ENCODE measurements at regions of chr9 and their contacts with region 1.

Region 1: GRCh38 chr9:92764988-92765936 is 629 bp upstream of the BICD2 start:
- DNase-seq: peak; percentile 96 to 99 (median 97)
- ATAC-seq: peak; percentile 89
- H3K4me3 ChIP-seq: peak overlapping the region; percentile 68 to 94
- H3K4me3 Mint-ChIP-seq: peak overlapping the region; percentile 91
- H3K27ac ChIP-seq: peak overlapping the region; percentile 98 to 99
- H3K27ac Mint-ChIP-seq: peak overlapping the region; percentile 98
- H3K4me1 ChIP-seq: peaks cover 37% of the 10 kb centered on the region
- H3K4me1 Mint-ChIP-seq: peaks cover 55% of the 10 kb centered on the region
- H3K27me3 ChIP-seq: no peaks in the 10 kb centered on the region
- H3K27me3 Mint-ChIP-seq: no peaks in the 10 kb centered on the region
- CTCF ChIP-seq: peak; percentile 91

Region 2: DNA sequence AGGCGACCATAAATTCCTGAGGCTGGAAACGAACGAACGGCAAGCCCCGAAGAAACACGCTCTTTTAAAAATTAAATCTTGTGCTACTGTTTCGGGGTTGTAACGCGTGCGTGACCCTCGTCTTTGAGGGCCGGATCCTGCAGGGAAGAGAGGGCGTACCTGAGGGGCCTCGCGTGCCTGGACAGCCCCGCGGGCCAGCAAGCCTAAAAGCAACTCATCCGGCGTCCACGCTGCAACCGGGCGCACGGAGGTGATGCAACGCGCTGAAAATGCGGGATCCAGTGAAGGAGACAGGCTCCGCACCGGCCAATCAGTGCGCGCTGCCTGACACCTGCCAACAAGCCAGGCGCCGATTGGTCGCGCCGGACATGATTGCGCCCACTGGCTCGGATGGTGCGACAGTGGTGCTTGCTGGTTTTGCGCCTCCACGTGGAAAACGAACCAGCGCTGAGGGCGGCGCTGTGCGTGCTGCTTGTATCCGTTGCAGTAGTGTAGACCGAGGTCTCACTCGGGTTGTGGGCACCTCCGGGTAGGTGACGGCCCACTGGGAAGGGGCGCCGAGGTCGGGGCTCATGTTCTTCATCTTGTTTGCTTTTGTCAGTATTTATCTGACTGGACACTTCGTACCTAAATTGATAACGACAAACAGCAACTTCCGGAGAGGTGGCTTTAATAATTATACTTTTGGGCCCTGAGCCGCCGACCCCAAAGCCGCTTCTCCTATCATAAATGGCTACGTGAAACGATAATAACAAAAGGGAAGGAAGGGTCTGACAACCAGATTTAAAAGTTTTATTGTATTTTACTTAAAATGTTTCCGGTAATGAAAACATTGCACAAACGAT is 471.6 kb before region 1 on chr9 and contains the start of gene IARS1:
- CTCF ChIA-PET with region 1: no interaction called
- POLR2A ChIA-PET with region 1: no interaction called
- intact Hi-C with region 1: loop called (anchors 1 kb)
- DNase-seq: peak; percentile 97 to 100 (median 100)
- ATAC-seq: peak; percentile 91
- H3K4me3 ChIP-seq: peak within 1 kb of the TSS; percentile 79 to 88
- H3K4me3 Mint-ChIP-seq: peak within 1 kb of the TSS; percentile 99
- H3K27ac ChIP-seq: peak within 1 kb of the TSS; percentile 78 to 90
- H3K27ac Mint-ChIP-seq: peak within 1 kb of the TSS; percentile 98
- H3K4me1 ChIP-seq: peaks cover 25% of the 10 kb centered on the region
- H3K4me1 Mint-ChIP-seq: peaks cover 46% of the 10 kb centered on the region
- H3K27me3 ChIP-seq: no peaks in the 10 kb centered on the region
- H3K27me3 Mint-ChIP-seq: no peaks in the 10 kb centered on the region
- CTCF ChIP-seq: peak; percentile 28
- total RNA-seq, gene IARS1: 64.2 to 66.2 TPM

Region 3: GRCh38 chr9:92716557-92716956 is 48.7 kb before region 1 on chr9:
- CTCF ChIA-PET with region 1: interaction called, 12 read pairs
- POLR2A ChIA-PET with region 1: no interaction called
- intact Hi-C with region 1: loop called (anchors 1 to 2 kb)
- DNase-seq: peak; percentile 74 to 90 (median 79)
- ATAC-seq: peak; percentile 97
- H3K4me3 ChIP-seq: no peak overlapping the region
- H3K4me3 Mint-ChIP-seq: no peak overlapping the region
- H3K27ac ChIP-seq: no peak overlapping the region
- H3K27ac Mint-ChIP-seq: peak overlapping the region; percentile 49
- H3K4me1 ChIP-seq: peaks cover 10% of the 10 kb centered on the region
- H3K4me1 Mint-ChIP-seq: peaks cover 19% of the 10 kb centered on the region
- H3K27me3 ChIP-seq: no peaks in the 10 kb centered on the region
- H3K27me3 Mint-ChIP-seq: no peaks in the 10 kb centered on the region
- CTCF ChIP-seq: peak; percentile 88

Region 4: GRCh38 chr9:92734931-92735361 is 30.3 kb before region 1 on chr9:
- CTCF ChIA-PET with region 1: no interaction called
- POLR2A ChIA-PET with region 1: no interaction called
- intact Hi-C with region 1: no loop called
- DNase-seq: no peak
- ATAC-seq: no peak
- H3K4me3 ChIP-seq: no peak overlapping the region
- H3K4me3 Mint-ChIP-seq: no peak overlapping the region
- H3K27ac ChIP-seq: no peak overlapping the region
- H3K27ac Mint-ChIP-seq: peak overlapping the region; percentile 49
- H3K4me1 ChIP-seq: peaks cover 31% of the 10 kb centered on the region
- H3K4me1 Mint-ChIP-seq: peaks cover 70% of the 10 kb centered on the region
- H3K27me3 ChIP-seq: no peaks in the 10 kb centered on the region
- H3K27me3 Mint-ChIP-seq: no peaks in the 10 kb centered on the region
- CTCF ChIP-seq: no peak

Region 5: DNA sequence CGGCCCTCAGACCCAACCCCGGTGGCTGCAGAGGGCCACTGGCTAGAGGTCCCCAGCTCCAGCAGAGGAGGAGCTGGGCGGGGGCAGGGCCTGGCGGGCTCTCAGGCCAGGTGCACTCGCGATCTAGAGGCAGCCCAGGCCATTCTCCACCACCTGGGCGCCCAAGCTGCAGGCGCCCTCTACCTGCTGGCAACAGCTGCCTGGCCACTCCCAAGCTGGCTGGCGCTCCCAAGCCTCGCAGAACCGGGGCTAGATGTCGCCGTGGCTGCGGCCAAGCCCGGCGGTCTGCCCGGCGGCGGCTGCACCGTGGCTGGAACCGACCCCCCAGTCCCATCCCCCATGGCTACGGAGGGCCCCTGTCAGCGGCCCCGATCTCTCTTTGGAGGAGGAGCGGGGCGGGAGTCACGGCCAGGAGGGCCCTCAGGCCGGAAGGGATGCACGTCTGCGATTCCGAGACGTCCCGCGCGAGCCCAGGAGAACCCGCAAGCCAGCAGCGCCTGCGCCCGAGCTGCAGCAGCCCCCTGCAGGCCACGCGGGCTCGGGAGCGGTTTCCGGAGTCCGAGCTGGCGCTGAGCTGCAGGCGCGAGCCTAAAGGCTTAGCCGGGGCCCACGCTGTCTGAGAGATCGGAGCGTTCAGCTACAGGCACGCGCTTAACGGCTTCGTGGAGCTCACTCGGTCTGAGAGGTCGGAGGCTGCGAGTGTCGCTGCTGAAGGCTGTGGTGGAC is 43.6 kb after region 1 on chr9:
- CTCF ChIA-PET with region 1: no interaction called
- POLR2A ChIA-PET with region 1: interaction called, 3 read pairs
- intact Hi-C with region 1: loop called in 1 of 2 experiments (anchors 5 kb)
- DNase-seq: peak in 7 of 9 experiments; percentile 34 to 70 (median 51)
- ATAC-seq: peak; percentile 54
- H3K4me3 ChIP-seq: peak overlapping the region; percentile 45 to 59
- H3K4me3 Mint-ChIP-seq: peak overlapping the region; percentile 85
- H3K27ac ChIP-seq: no peak overlapping the region
- H3K27ac Mint-ChIP-seq: no peak overlapping the region
- H3K4me1 ChIP-seq: peaks cover 23% of the 10 kb centered on the region
- H3K4me1 Mint-ChIP-seq: peaks cover 18% of the 10 kb centered on the region
- H3K27me3 ChIP-seq: peaks cover 42 to 52% of the 10 kb centered on the region in 2 experiments
- H3K27me3 Mint-ChIP-seq: peaks cover 44% of the 10 kb centered on the region
- CTCF ChIP-seq: no peak

Region 6: DNA sequence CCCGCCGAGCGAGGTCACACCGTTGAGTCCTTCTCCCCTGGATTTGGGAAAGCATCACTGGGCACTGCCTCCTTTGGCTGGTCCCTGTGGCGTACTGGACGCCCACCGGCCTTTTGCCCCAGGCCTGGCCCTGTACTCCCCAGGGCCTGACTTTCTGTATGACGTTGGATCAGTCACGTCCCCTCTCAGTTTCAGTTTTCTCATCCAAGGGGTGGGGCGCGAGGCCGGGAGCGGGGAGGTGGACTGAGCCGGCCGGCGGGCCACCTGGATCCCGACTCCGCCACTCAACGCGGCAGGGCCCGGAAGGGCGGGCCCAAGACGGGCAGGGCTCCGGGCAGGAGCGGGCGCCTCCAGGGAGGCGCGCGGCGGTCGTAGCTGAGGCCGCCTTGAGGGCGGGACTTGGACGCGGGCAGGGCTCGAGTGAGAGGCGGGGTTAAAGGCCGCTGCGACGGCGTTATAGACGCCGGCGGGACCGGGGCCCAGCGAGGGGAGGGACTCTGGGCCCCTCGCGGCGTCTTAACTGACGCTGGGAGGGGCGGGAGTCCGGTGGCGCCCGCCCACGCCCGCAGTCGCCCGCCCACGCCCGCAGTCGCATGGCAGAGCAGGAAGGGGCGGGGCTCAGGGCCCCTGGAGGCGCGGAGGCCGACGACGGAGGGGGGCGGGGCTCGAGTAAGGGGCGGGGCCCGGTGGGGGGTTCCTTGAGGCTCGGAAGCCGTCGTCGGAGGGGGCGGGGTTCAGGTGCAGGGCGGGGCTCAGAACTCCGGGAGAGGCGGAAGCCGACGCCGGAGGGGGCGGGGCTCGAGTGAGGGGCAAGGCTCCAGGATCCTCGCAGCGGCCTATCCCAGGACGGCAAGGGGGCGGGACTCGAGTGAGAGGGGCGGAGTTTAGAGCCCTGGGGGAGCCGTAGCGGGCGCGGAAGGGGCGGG is 330.2 kb after region 1 on chr9:
- CTCF ChIA-PET with region 1: no interaction called
- POLR2A ChIA-PET with region 1: no interaction called
- intact Hi-C with region 1: loop called in 1 of 2 experiments (anchors 2 kb)
- DNase-seq: peak; percentile 100
- ATAC-seq: peak; percentile 83
- H3K4me3 ChIP-seq: peak overlapping the region; percentile 70 to 89
- H3K4me3 Mint-ChIP-seq: peak overlapping the region; percentile 85
- H3K27ac ChIP-seq: peak overlapping the region; percentile 90 to 98
- H3K27ac Mint-ChIP-seq: peak overlapping the region; percentile 97
- H3K4me1 ChIP-seq: peaks cover 65% of the 10 kb centered on the region
- H3K4me1 Mint-ChIP-seq: peaks cover 71% of the 10 kb centered on the region
- H3K27me3 ChIP-seq: no peaks in the 10 kb centered on the region
- H3K27me3 Mint-ChIP-seq: no peaks in the 10 kb centered on the region
- CTCF ChIP-seq: no peak

Region 7: GRCh38 chr9:94166237-94166963 is 1401.1 kb after region 1 on chr9:
- CTCF ChIA-PET with region 1: no interaction called
- POLR2A ChIA-PET with region 1: no interaction called
- intact Hi-C with region 1: loop called in 1 of 2 experiments (anchors 2 kb)
- DNase-seq: peak; percentile 88 to 98 (median 93)
- ATAC-seq: peak; percentile 60
- H3K4me3 ChIP-seq: peak overlapping the region; percentile 52 to 89
- H3K4me3 Mint-ChIP-seq: peak overlapping the region; percentile 90
- H3K27ac ChIP-seq: peak overlapping the region; percentile 89 to 92
- H3K27ac Mint-ChIP-seq: peak overlapping the region; percentile 93
- H3K4me1 ChIP-seq: peaks cover 51% of the 10 kb centered on the region
- H3K4me1 Mint-ChIP-seq: peaks cover 55% of the 10 kb centered on the region
- H3K27me3 ChIP-seq: no peaks in the 10 kb centered on the region
- H3K27me3 Mint-ChIP-seq: no peaks in the 10 kb centered on the region
- CTCF ChIP-seq: no peak